ENCODE measurements at regions of chr4 and their contacts with region 1.

Region 1: GRCh38 chr4:46354701-46355262 is 35.1 kb downstream of the GABRA2 start:
- DNase-seq: no peak
- H3K4me3 ChIP-seq: no peak overlapping the region
- H3K27ac ChIP-seq: no peak overlapping the region
- H3K4me1 ChIP-seq: no peaks in the 10 kb centered on the region
- CTCF ChIP-seq: no peak

Region 2: GRCh38 chr4:46425775-46426400 is 71.1 kb after region 1 on chr4:
- CTCF ChIA-PET with region 1: no interaction called
- POLR2A ChIA-PET with region 1: no interaction called
- intact Hi-C with region 1: loop called (anchors 5 kb)
- DNase-seq: no peak
- H3K4me3 ChIP-seq: no peak overlapping the region
- H3K27ac ChIP-seq: no peak overlapping the region
- H3K4me1 ChIP-seq: no peaks in the 10 kb centered on the region
- CTCF ChIP-seq: no peak

Measured in OCI-LY7 (cell line).